ENCODE measurements at regions of chr3 and their contacts with region 1.

Region 1: DNA sequence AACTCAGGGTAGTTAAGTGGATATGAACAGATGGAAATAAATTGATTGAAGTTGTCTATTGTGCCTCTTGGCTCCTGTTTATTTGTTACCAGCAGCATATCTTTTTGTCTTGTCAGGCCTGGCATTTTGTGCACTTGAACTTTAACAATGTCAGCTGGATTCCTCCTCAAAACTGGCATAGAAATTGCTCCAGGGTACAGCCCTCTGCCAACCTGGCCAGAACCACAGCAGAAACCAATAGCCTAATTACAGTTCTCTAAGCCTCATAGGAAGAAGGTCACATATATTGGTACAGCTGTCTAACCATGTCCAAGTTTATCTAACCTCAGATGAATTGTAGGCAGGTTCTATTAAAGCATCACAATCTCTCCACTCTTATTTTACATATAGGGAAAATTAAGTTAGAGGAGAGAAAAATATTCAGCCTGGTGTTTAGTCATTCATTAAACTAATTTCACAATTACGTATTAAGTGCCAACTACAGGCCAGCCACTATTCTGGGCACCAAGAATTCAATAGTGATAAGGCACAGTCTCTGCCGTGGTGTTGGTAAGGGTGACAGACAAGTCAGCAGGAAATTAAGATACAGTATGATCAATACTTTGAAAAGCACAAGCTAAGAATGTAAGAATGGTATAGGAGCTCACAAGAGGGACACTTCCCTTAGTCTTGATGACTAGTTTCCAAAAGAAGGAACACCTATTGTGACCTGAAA is 452.9 kb upstream of the NECTIN3 start:
- DNase-seq: no peak
- H3K4me3 ChIP-seq: no peak overlapping the region
- H3K27ac ChIP-seq: no peak overlapping the region
- H3K4me1 ChIP-seq: no peaks in the 10 kb centered on the region
- H3K27me3 ChIP-seq: no peaks in the 10 kb centered on the region
- CTCF ChIP-seq: no peak
- POLR2A ChIP-seq: no peak

Region 2: DNA sequence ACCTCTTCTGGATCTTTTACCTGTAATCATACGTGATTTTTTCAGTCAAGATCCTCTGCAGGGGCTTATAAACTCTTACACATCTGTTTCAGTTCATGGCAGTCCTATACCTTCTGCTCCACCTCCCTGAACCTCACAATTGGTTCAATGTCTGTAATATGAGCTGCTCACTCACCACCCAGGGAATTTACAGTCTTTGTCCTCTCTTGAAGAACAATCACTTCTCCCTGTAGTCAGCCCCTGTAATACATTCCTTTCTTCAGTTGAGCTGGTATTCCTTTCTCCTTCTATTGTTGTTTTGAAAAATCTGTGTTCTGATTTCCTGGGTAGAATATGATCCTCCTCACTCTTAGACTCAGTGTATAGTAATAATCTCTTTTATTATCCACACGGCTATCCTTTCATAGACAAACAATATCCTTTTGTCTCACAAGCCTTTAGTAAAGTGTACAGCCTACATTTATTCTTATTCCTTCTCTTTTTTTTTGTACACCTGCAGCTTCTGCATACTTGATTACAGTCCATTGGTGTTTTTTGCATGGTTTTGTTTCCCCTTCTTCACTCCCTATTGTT is 554.7 kb after region 1 on chr3:
- intact Hi-C with region 1: loop called (anchors 5 kb)
- DNase-seq: no peak
- H3K4me3 ChIP-seq: no peak overlapping the region
- H3K27ac ChIP-seq: no peak overlapping the region
- H3K4me1 ChIP-seq: no peaks in the 10 kb centered on the region
- H3K27me3 ChIP-seq: no peaks in the 10 kb centered on the region
- CTCF ChIP-seq: no peak
- POLR2A ChIP-seq: no peak

Region 3: GRCh38 chr3:111362381-111363009 is 743.8 kb after region 1 on chr3:
- intact Hi-C with region 1: no loop called
- DNase-seq: no peak
- H3K4me3 ChIP-seq: no peak overlapping the region
- H3K27ac ChIP-seq: no peak overlapping the region
- H3K4me1 ChIP-seq: no peaks in the 10 kb centered on the region
- H3K27me3 ChIP-seq: no peaks in the 10 kb centered on the region
- CTCF ChIP-seq: no peak
- POLR2A ChIP-seq: no peak